MCF 10A (cell line): ENCODE measurements at regions of chr1 and their contacts with region 1.

Region 1: GRCh38 chr1:223123011-223123610 is 19.9 kb downstream of the TLR5 start:
- DNase-seq: no peak
- H3K4me3 Mint-ChIP-seq: peak overlapping the region; percentile 3
- H3K27ac Mint-ChIP-seq: no peak overlapping the region
- H3K4me1 Mint-ChIP-seq: peaks cover 9% of the 10 kb centered on the region
- H3K27me3 Mint-ChIP-seq: no peaks in the 10 kb centered on the region
- CTCF ChIP-seq: no peak

Region 2: GRCh38 chr1:222792744-222793143 is 330.4 kb before region 1 on chr1:
- CTCF ChIA-PET with region 1: interaction called, 28 read pairs
- POLR2A ChIA-PET with region 1: interaction called, 4 read pairs
- intact Hi-C with region 1: loop called (anchors 1 kb)
- DNase-seq: peak; percentile 56
- H3K4me3 Mint-ChIP-seq: no peak overlapping the region
- H3K27ac Mint-ChIP-seq: no peak overlapping the region
- H3K4me1 Mint-ChIP-seq: peaks cover 18% of the 10 kb centered on the region
- H3K27me3 Mint-ChIP-seq: peaks cover 8% of the 10 kb centered on the region
- CTCF ChIP-seq: peak; percentile 81

Region 3: GRCh38 chr1:222928212-222928611 is 194.9 kb before region 1 on chr1:
- CTCF ChIA-PET with region 1: no interaction called
- POLR2A ChIA-PET with region 1: no interaction called
- intact Hi-C with region 1: no loop called
- DNase-seq: no peak
- H3K4me3 Mint-ChIP-seq: no peak overlapping the region
- H3K27ac Mint-ChIP-seq: no peak overlapping the region
- H3K4me1 Mint-ChIP-seq: no peaks in the 10 kb centered on the region
- H3K27me3 Mint-ChIP-seq: no peaks in the 10 kb centered on the region
- CTCF ChIP-seq: no peak

Region 4: DNA sequence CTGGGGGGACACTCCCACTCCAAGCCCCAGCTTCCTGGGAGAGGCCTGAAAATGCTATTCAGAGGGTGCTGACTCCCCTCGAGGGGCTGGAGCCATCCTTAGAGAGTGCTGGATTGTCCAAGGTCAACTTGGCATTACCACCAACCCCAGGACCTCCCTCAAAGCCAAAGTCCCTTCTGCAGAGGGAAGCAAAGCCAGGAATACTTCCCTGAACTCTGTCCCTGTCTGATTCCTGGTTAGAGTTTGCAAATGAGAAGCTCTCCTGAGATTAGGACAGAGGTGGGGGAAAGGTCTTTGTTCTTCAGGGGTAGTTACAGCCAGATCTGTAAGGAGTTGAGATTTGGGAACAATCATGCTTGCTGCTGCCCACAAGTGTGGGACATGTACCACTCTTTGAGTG is 25.4 kb before region 1 on chr1:
- CTCF ChIA-PET with region 1: interaction called, 37 read pairs
- POLR2A ChIA-PET with region 1: no interaction called
- intact Hi-C with region 1: no loop called
- DNase-seq: no peak
- H3K4me3 Mint-ChIP-seq: no peak overlapping the region
- H3K27ac Mint-ChIP-seq: no peak overlapping the region
- H3K4me1 Mint-ChIP-seq: no peaks in the 10 kb centered on the region
- H3K27me3 Mint-ChIP-seq: no peaks in the 10 kb centered on the region
- CTCF ChIP-seq: no peak

Region 5: GRCh38 chr1:223153177-223154119 is 30.3 kb after region 1 on chr1:
- CTCF ChIA-PET with region 1: interaction called, 24 read pairs
- POLR2A ChIA-PET with region 1: no interaction called
- intact Hi-C with region 1: no loop called
- DNase-seq: peak; percentile 30
- H3K4me3 Mint-ChIP-seq: no peak overlapping the region
- H3K27ac Mint-ChIP-seq: no peak overlapping the region
- H3K4me1 Mint-ChIP-seq: peaks cover 8% of the 10 kb centered on the region
- H3K27me3 Mint-ChIP-seq: no peaks in the 10 kb centered on the region
- CTCF ChIP-seq: no peak

Region 6: DNA sequence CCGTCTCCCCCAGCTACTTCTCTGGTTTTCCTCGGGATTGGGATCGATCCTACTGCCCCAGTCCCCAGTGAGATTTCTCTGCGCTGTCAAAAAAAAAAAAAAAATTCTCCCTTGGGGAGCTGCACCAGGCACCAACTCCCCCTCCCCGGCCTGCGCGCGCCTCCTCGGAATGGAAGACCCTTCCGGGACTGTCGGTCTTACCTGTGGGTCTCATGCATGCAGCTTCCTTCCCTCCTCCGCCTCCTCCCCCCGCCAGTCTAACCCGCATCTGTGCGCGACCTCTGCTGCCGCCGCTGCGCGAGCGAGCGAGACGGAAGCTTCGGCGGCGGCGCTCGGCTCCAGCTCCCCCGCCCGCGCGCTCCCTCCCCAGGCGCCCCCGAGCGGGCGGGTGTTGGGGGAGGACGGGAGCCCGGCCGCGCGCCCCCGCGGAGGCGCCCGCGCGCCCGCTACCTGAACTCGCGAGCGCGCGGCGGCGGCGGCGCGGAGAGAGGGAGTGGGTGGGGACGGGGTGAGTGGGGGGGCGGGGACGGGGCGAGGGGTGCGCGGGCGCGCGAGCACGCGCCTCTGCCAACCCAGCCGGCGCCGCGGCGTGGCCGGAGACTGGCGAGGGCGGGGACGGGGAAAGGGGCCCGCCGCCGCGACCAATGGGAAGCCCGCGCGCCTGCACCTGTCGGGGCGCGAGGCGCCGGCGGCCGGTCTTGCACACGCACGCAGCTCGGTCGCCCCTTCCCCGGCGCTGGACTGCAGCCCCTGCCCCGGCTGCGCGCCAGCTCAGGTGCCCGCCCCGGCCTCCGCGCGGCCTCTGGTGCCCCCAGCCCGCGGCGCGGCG is 241.0 kb after region 1 on chr1 and contains the start of gene SUSD4:
- CTCF ChIA-PET with region 1: interaction called, 171 read pairs
- POLR2A ChIA-PET with region 1: no interaction called
- intact Hi-C with region 1: no loop called
- DNase-seq: no peak
- H3K4me3 Mint-ChIP-seq: peak within 1 kb of the TSS; percentile 69
- H3K27ac Mint-ChIP-seq: no peak within 1 kb of the TSS
- H3K4me1 Mint-ChIP-seq: no peaks in the 10 kb centered on the region
- H3K27me3 Mint-ChIP-seq: peaks cover 77% of the 10 kb centered on the region
- CTCF ChIP-seq: no peak
- total RNA-seq, gene SUSD4: 0.42 and 2.3 TPM in 2 replicates

Region 7: DNA sequence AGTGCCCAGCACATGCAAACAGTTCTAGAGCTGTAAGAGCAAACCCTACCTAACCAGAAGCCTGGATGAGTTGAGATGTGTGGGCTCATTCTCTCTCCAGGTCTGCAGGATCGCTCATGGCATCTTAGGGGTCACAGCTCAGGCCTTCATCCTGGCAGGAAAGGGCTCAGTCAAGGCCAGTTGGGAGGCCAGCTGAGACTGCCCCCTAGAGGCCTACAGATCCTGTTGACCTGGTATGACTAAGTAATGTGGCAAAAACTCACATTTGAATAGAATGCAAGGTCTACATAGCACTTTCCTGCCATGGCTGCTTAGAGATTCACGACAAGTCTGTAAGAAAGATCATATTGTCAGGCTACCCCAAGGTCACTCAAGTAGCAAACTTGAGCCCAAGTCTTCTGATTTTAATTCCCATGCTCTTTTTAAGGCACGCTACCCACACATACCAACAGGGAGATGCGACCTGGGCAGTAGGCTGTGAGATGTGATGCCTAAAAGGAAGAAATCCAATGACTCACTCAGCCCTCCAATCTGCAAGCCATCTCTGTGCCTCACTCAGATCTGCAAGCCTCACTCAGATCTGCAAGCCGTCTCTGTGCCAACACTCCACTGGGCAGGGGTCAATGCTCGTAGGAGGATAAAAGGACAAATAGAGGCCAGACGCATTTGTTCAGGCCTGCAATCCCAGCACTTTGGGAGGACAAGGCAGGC is 547.5 kb after region 1 on chr1:
- CTCF ChIA-PET with region 1: interaction called, 14 read pairs
- POLR2A ChIA-PET with region 1: no interaction called
- intact Hi-C with region 1: no loop called
- DNase-seq: peak; percentile 87
- H3K4me3 Mint-ChIP-seq: no peak overlapping the region
- H3K27ac Mint-ChIP-seq: no peak overlapping the region
- H3K4me1 Mint-ChIP-seq: peaks cover 22% of the 10 kb centered on the region
- H3K27me3 Mint-ChIP-seq: no peaks in the 10 kb centered on the region
- CTCF ChIP-seq: peak; percentile 97